Posterior vena cava (tissue), 2 donors: ENCODE measurements at regions of chr17 and their contacts with region 1.

Region 1: DNA sequence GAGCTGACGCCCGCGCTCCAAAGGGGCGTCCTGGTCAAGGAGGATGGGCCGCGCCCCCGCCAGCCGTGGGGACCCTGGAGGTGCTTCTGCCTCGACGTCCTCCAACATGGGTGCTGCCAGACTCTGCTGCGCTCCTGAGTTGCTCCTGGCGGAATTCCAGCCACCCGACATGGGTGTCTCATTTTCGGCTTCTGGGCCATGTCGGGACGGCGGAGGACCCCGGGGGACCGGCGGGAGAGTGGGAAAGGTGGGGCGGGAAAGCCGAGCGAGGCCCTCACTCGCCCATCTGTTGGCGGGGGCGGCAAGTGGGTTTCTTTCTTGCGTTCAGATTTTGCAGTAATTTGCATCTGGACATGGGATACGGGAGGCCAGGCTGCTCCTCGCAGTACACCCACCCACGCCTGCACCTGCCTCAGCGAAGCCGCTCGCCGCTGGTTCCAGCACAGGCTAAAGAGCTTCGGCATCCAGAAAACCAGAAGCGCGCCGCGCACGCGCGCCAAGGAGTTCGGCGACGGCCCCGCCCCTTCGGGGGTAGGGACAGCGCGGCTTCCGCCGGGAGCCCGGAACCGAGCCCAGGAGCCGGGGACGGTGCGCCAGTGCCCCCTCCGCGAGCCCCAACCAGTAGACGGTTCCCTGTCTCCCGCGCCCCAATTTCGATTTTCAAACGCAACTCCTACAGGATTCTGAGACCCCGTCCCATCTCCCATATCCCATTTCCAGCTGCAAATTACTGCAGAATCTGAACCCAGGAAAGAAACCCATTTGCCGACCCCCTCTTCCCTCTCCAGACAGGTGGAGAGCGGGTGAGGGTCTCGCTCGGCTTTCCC is at the start of gene ARMC7:
- DNase-seq: peak; percentile 97
- total RNA-seq, gene ARMC7: 5.8 to 6.4 TPM

Region 2: GRCh38 chr17:75077496-75078283 is 31.9 kb before region 1 on chr17:
- intact Hi-C with region 1: loop called in 1 of 2 experiments (anchors 5 kb)
- DNase-seq: peak; percentile 91

Region 3: DNA sequence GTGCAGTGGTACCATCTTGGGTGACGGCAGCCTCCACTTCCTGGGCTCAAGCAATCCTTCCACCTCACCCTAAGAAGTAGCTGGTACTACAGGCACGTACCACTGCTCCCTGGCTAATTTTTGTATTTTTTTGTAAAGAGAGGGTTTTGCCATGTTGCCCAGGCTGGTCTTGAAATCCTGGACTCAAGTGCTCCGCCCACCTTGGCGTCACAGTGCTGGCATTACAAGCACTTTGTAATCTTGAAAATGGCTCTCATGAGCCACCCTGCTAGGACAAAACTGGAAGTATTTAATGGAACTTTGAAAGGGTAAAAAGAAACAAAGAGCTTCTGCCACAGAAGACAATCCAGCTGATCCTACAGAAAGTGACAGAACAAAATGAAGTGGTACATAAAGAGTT is 63.9 kb after region 1 on chr17:
- intact Hi-C with region 1: loop called in 1 of 2 experiments (anchors 10 kb)
- DNase-seq: no peak

Region 4: DNA sequence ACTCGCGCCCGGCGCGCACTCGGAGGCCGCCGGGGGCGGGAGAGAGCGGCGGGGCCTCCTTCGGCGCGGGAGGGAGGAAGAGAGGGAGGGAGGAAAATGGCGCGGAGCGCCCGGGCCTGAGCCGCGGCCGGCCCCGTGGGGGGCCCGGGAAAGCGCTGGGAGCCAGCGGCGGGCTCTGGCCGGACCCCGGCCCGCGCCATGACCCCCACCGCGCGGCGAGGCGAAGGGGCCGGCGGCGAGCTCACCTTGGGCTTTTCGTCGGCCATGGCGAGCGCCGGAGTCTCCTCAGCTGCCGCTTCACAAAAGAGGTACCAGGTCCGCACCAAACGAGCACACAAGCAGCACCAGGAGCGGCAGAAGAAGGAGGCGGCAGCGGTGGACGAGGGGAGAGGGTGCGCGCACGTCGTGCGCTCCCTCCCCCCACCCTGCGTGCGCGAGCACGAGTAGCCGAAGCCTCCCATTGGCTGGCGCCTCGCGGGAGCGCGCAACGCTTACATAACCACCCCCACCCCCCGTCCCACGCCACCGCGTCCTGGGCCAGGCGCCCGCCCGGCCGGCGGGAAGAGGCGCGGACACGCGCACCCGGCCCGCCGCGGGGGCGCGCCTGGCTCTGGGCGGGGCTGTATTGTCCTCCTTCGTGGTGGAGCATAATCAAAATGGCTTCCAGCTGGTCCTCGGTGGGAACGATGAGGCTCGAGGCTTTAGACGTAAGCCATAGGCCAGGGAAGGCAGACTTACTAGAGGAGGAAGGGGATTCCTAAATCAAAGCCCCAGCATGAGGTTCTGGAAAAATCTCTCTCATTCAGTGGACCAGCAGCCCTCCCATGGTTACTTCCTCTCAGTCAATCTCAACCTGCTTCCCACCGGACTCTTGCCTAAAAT is 73.2 kb after region 1 on chr17 and contains the start of gene SUMO2:
- intact Hi-C with region 1: loop called (anchors 10 kb)
- DNase-seq: peak; percentile 98
- total RNA-seq, gene SUMO2: 221 to 238 TPM